H1 (cell line): ENCODE measurements at regions of chr5 and their contacts with region 1.

Region 1: GRCh38 chr5:34522599-34523386 is 133.3 kb upstream of the RAI14 start:
- DNase-seq: peak; percentile 67 to 89
- H3K4me3 ChIP-seq: no peak overlapping the region
- H3K27ac ChIP-seq: no peak overlapping the region
- H3K4me1 ChIP-seq: peaks cover 0 to 9% (median 3%) of the 10 kb centered on the region in 4 experiments; a peak in 3 of 7 replicates
- H3K27me3 ChIP-seq: no peaks in the 10 kb centered on the region
- CTCF ChIP-seq: peak; percentile 43 to 89 (median 74)
- EP300 ChIP-seq: peak in 1 of 2 experiments; percentile 37; a peak in 1 of 3 replicates
- POLR2A ChIP-seq: no peak
- RAD21 ChIP-seq: peak; percentile 90

Region 2: DNA sequence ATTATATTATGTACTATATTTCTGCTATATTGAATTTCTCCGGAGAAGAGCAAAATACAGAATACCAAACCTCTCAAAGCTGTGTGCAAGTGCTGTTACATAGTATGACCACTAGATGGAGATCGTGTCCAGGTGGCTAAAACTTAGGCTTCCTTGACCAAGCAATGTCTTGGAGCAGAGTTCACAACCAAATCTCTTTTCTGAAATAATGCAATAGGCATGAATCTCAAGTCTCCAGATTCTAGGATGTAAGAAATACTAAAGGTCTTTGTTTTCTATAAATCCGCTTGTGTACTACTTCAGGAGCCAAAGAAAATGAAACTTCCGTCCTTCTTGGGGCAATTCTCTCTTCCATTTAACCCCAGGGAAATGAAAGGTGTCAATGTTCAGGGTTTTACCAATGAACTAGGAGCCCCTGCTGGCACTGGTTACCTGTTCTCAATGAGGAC is 48.2 kb before region 1 on chr5:
- CTCF ChIA-PET with region 1: interaction called, 12 read pairs
- POLR2A ChIA-PET with region 1: interaction called, 7 read pairs
- DNase-seq: no peak
- H3K4me3 ChIP-seq: peak overlapping the region in 1 of 4 experiments; percentile 32; a peak in 1 of 8 replicates
- H3K27ac ChIP-seq: peak overlapping the region; percentile 92
- H3K4me1 ChIP-seq: peaks cover 6 to 14% (median 9%) of the 10 kb centered on the region in 4 experiments; a peak in 6 of 7 replicates
- H3K27me3 ChIP-seq: no peaks in the 10 kb centered on the region
- CTCF ChIP-seq: peak in 2 of 3 experiments; percentile 75 to 87; a peak in 3 of 4 replicates
- EP300 ChIP-seq: no peak
- POLR2A ChIP-seq: no peak
- RAD21 ChIP-seq: peak; percentile 92 to 94

Region 3: DNA sequence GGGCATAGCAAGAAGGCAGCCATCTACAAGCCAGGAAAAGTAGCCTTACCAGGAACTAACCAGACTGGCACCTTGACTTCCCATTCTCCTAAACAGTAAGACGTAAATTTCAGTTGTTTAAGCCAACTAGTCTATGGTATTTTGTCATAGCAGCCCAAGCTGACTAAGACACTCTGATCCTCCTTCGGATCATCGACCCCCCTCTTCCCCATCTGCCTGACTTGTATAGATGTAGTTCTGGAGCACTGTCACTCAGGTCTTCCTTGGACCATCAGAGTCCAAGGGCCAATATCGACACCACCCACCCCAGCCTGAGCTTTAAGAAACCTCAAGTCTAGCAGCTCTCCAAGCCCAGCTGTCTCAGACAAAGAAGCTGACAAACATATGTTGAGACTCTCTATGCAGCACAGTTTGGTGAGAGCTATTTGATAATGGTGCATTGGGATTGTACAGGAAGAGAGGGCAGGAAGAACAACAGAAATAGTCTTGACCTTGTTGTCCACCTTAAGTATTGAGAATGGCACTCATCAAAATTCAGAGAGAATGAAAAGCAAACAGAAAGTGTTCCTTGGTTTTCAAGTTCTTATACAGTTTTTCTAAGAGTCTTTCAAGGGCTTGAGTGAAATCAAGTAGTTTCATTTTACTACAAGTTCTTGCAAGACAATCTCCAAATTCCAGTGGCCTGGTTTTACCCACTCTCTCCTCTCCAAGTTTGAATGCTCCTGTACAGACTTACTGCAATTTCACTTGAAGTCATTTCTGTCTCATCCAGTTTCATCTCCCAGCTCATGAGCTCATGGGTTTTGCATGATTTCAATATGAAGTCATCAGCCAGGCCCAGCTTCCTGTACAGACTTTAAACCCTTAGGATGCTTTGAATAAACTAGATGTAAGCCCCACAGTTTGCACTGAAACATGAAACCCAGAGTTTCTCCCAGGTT is 11.1 kb after region 1 on chr5:
- CTCF ChIA-PET with region 1: interaction called, 31 read pairs
- POLR2A ChIA-PET with region 1: no interaction called
- DNase-seq: no peak
- H3K4me3 ChIP-seq: no peak overlapping the region
- H3K27ac ChIP-seq: no peak overlapping the region
- H3K4me1 ChIP-seq: peaks cover 0 to 6% (median 4%) of the 10 kb centered on the region in 4 experiments; a peak in 4 of 7 replicates
- H3K27me3 ChIP-seq: no peaks in the 10 kb centered on the region
- CTCF ChIP-seq: no peak
- EP300 ChIP-seq: no peak
- POLR2A ChIP-seq: no peak
- RAD21 ChIP-seq: no peak

Region 4: GRCh38 chr5:34563951-34564709 is 41.3 kb after region 1 on chr5:
- CTCF ChIA-PET with region 1: interaction called, 12 read pairs
- POLR2A ChIA-PET with region 1: no interaction called
- DNase-seq: no peak
- H3K4me3 ChIP-seq: no peak overlapping the region
- H3K27ac ChIP-seq: no peak overlapping the region
- H3K4me1 ChIP-seq: peaks cover 0 to 10% (median 7%) of the 10 kb centered on the region in 4 experiments; a peak in 6 of 7 replicates
- H3K27me3 ChIP-seq: no peaks in the 10 kb centered on the region
- CTCF ChIP-seq: no peak
- EP300 ChIP-seq: no peak
- POLR2A ChIP-seq: no peak
- RAD21 ChIP-seq: no peak

Region 5: GRCh38 chr5:34791761-34792244 is 269.0 kb after region 1 on chr5:
- CTCF ChIA-PET with region 1: no interaction called
- POLR2A ChIA-PET with region 1: no interaction called
- DNase-seq: no peak
- H3K4me3 ChIP-seq: no peak overlapping the region
- H3K27ac ChIP-seq: no peak overlapping the region
- H3K4me1 ChIP-seq: peaks cover 0 to 4% (median 0%) of the 10 kb centered on the region in 4 experiments; a peak in 1 of 7 replicates
- H3K27me3 ChIP-seq: no peaks in the 10 kb centered on the region
- CTCF ChIP-seq: no peak
- EP300 ChIP-seq: no peak
- POLR2A ChIP-seq: no peak
- RAD21 ChIP-seq: no peak